Activated CD8-positive, alpha-beta T cell treated with anti-CD3 and anti-CD28 coated beads for 36 hours (primary cell): ENCODE measurements at regions of chr11 and their contacts with region 1.

Region 1: GRCh38 chr11:118380571-118380970 is 20.8 kb upstream of the ATP5MG start:
- DNase-seq: no peak
- ATAC-seq: no peak
- H3K4me3 Mint-ChIP-seq: no peak overlapping the region
- H3K27ac Mint-ChIP-seq: no peak overlapping the region
- H3K4me1 Mint-ChIP-seq: peaks cover 2% of the 10 kb centered on the region
- H3K27me3 Mint-ChIP-seq: no peaks in the 10 kb centered on the region
- CTCF ChIP-seq: no peak

Region 2: GRCh38 chr11:118223570-118223969 is 157.0 kb before region 1 on chr11:
- CTCF ChIA-PET with region 1: no interaction called
- POLR2A ChIA-PET with region 1: no interaction called
- intact Hi-C with region 1: no loop called
- DNase-seq: no peak
- ATAC-seq: peak; percentile 18
- H3K4me3 Mint-ChIP-seq: peak overlapping the region; percentile 96
- H3K27ac Mint-ChIP-seq: no peak overlapping the region
- H3K4me1 Mint-ChIP-seq: peaks cover 74% of the 10 kb centered on the region
- H3K27me3 Mint-ChIP-seq: no peaks in the 10 kb centered on the region
- CTCF ChIP-seq: no peak

Region 3: GRCh38 chr11:118366287-118366686 is 14.3 kb before region 1 on chr11:
- CTCF ChIA-PET with region 1: interaction called, 14 read pairs
- POLR2A ChIA-PET with region 1: interaction called, 5 read pairs
- intact Hi-C with region 1: no loop called
- DNase-seq: no peak
- ATAC-seq: no peak
- H3K4me3 Mint-ChIP-seq: no peak overlapping the region
- H3K27ac Mint-ChIP-seq: no peak overlapping the region
- H3K4me1 Mint-ChIP-seq: peaks cover 26% of the 10 kb centered on the region
- H3K27me3 Mint-ChIP-seq: no peaks in the 10 kb centered on the region
- CTCF ChIP-seq: no peak

Region 4: GRCh38 chr11:118705111-118705741 is 324.7 kb after region 1 on chr11:
- CTCF ChIA-PET with region 1: no interaction called
- POLR2A ChIA-PET with region 1: no interaction called
- intact Hi-C with region 1: no loop called
- DNase-seq: peak; percentile 70
- ATAC-seq: peak; percentile 86
- H3K4me3 Mint-ChIP-seq: peak overlapping the region; percentile 41
- H3K27ac Mint-ChIP-seq: peak overlapping the region; percentile 82
- H3K4me1 Mint-ChIP-seq: peaks cover 28% of the 10 kb centered on the region
- H3K27me3 Mint-ChIP-seq: no peaks in the 10 kb centered on the region
- CTCF ChIP-seq: no peak